Activated CD8-positive, alpha-beta T cell treated with anti-CD3 and anti-CD28 coated beads for 36 hours (primary cell): ENCODE measurements at regions of chr12 and their contacts with region 1.

Region 1: DNA sequence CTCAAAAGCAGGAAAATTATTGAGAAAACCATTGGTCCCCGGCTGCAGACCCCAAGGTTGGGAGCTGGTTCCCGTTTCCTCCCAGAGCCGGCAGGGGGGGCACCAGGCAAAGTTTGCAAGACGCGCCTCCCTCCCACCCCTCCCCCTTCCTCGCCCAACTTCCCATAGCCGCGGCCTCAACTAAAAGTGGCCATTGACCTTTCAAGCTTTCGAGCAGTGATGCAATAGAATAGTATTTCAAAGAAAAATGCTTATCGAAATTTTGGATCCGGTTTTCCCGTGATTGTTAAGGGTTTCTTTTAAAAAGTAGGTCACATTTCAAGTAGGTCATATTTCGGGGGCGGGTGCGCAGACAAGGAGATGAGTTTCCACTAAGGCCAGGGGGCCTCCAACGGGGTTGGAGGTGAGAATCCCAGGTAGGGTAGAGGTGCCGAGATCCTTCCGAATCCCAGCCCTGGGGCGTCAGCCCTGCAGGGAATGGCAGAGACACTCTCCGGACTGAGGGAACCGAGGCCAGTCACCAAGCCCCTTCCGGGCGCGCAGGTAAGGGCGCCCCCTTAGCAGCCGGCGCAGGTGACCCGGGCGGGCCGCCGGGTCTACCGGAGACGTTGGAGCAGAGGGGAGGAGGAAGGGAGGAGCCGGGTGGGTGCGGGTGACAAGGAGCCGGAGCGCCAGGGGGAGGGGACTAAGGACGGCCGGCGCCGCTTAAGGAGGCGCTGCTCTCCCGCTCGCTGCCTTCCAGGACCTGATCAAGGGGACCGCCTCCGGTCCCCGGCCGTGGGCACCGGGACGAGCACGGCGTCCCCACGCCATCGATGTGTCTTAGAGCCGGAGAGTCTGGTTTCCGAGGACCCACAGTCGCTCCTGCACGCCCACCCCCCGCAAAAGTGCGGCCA is 2.6 kb upstream of the SOCS2 start:
- DNase-seq: peak; percentile 86
- ATAC-seq: peak; percentile 56
- H3K4me3 Mint-ChIP-seq: peak overlapping the region; percentile 81
- H3K27ac Mint-ChIP-seq: peak overlapping the region; percentile 88
- H3K4me1 Mint-ChIP-seq: peaks cover 26% of the 10 kb centered on the region
- H3K27me3 Mint-ChIP-seq: peaks cover 11% of the 10 kb centered on the region
- CTCF ChIP-seq: peak; percentile 79

Region 2: DNA sequence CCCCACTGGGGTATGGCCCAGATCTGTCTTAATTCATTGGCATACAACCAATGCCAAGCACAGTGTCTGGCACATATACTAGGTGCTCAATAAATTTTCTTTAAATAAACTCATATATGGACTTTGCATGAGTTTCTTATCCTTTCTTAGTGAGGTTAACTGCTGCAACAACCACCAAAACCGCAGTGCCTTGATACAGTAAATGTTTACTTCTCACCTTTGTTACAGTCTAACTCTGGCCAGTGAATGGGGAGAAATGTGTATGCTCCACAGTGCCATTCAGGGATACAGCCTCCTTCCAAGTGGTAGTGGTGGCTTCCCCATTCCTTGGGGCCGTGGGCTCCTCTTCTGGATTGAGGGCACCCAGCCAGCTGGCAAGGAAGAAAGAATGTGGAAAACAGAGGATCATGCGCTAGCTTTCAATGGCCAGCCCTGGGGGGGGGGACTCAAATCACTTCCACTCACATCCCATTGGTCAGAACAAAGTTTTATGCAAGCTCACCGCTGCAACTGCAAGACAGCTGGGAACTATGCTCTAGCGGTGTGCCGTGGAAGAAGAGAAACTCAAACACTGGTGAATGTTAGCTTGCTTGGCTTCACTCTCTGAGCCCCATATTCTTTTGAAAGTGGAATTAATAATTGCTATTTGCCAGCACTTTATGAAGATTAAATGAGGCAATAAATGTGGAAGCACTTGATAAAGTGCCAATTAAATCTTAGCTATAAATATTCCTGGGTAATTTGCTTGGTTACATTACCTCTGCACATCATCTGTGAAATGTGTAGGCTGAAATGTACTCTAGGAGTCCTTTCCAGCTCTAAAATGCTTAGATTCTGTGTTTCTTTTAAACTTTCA is 48.5 kb before region 1 on chr12:
- CTCF ChIA-PET with region 1: no interaction called
- POLR2A ChIA-PET with region 1: no interaction called
- intact Hi-C with region 1: no loop called
- DNase-seq: no peak
- ATAC-seq: no peak
- H3K4me3 Mint-ChIP-seq: no peak overlapping the region
- H3K27ac Mint-ChIP-seq: no peak overlapping the region
- H3K4me1 Mint-ChIP-seq: no peaks in the 10 kb centered on the region
- H3K27me3 Mint-ChIP-seq: peaks cover 5% of the 10 kb centered on the region
- CTCF ChIP-seq: no peak

Region 3: DNA sequence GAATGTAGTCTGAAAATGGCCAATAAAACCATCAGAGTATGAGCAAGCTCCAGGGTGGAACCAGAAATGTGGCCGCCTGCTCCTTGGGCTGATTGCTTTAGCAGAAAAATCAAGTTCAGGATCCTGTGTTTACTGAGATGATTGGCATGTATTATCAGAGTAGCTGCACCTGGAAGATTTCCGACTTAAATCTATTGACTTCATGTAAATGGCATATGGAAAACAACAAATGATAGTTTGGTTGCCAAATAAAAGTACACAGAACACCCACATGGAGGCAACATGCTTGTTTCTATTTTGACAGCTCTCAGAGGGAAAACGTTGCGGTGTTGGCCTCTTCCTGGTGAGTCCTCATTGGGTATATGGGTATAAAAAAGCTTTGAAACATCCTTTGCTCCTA is 33.9 kb after region 1 on chr12:
- CTCF ChIA-PET with region 1: no interaction called
- POLR2A ChIA-PET with region 1: no interaction called
- intact Hi-C with region 1: no loop called
- DNase-seq: no peak
- ATAC-seq: no peak
- H3K4me3 Mint-ChIP-seq: no peak overlapping the region
- H3K27ac Mint-ChIP-seq: no peak overlapping the region
- H3K4me1 Mint-ChIP-seq: peaks cover 2% of the 10 kb centered on the region
- H3K27me3 Mint-ChIP-seq: peaks cover 8% of the 10 kb centered on the region
- CTCF ChIP-seq: no peak

Region 4: GRCh38 chr12:93677195-93678064 is 107.5 kb after region 1 on chr12 and contains the start of gene CRADD:
- CTCF ChIA-PET with region 1: interaction called, 3 read pairs
- POLR2A ChIA-PET with region 1: interaction called, 5 read pairs
- intact Hi-C with region 1: loop called (anchors 2 kb)
- DNase-seq: peak; percentile 92
- ATAC-seq: peak; percentile 96
- H3K4me3 Mint-ChIP-seq: peak within 1 kb of the TSS; percentile 98
- H3K27ac Mint-ChIP-seq: peak within 1 kb of the TSS; percentile 100
- H3K4me1 Mint-ChIP-seq: peaks cover 31% of the 10 kb centered on the region
- H3K27me3 Mint-ChIP-seq: peaks cover 10% of the 10 kb centered on the region
- CTCF ChIP-seq: no peak
- total RNA-seq, gene CRADD: 7.0 to 11.3 TPM

Region 5: DNA sequence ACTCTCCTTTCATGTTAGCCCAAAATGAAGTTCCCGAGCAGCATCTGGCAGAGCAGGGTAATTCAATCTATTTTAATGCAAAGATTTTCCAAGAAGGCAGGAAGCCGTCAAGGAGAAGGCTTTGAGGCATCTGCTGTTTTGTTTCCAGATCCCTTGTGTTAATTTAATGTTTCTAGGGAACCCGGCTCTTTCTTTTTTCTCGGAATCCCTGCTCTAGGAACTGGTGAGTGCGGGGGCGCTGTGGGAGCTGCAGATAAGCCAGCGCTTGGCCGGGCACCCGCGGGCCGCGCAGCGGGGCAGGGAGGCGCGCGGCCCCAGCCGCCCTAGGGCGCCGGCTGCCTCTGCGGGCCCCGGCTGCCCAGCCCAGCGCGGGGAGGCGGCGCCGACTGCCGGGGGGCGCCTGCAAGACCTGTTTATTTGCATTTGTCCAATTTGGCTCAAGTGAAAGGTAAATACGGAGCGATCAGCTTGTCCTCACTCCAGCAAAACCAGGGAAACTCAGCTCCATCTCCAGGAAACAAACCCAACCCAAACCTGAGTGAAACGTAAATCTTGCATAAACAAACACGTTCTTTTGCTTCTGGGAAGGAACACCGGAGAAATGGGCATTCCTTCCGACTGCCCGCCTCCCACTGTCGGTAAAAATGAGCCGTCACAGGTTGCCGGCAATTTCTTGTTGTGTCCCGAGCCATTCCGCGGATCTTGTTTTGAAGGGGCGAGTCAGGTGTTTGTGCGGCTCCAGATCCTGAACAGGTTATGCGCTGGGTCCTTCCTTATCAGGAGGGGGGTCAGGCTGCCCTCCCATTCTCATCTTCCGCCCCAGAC is 172.4 kb after region 1 on chr12:
- CTCF ChIA-PET with region 1: interaction called, 5 read pairs
- POLR2A ChIA-PET with region 1: interaction called, 3 read pairs
- intact Hi-C with region 1: loop called (anchors 2 kb)
- DNase-seq: peak; percentile 87
- ATAC-seq: peak; percentile 94
- H3K4me3 Mint-ChIP-seq: peak overlapping the region; percentile 80
- H3K27ac Mint-ChIP-seq: peak overlapping the region; percentile 95
- H3K4me1 Mint-ChIP-seq: peaks cover 36% of the 10 kb centered on the region
- H3K27me3 Mint-ChIP-seq: no peaks in the 10 kb centered on the region
- CTCF ChIP-seq: no peak

Region 6: DNA sequence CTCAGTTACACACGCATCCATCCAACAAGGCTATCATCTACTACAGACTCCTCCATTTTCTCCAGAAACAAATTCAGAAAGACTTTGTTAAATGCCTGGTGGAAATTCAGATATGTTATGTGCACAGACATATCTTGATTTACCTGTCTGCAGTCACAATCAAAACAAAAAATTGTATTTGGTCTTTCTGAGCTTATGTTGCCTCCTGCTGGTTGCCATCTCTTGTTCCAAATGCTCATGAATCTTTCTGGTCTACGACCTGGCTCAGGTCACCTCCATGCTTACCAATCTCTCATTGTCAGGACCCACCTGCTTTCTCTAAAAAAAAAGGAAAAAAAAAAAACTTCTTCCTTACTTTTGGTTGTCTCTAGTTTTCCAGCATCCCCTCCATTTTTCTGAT is 409.3 kb after region 1 on chr12:
- CTCF ChIA-PET with region 1: interaction called, 4 read pairs
- POLR2A ChIA-PET with region 1: no interaction called
- intact Hi-C with region 1: loop called (anchors 10 kb)
- DNase-seq: peak; percentile 44
- ATAC-seq: no peak
- H3K4me3 Mint-ChIP-seq: no peak overlapping the region
- H3K27ac Mint-ChIP-seq: no peak overlapping the region
- H3K4me1 Mint-ChIP-seq: peaks cover 20% of the 10 kb centered on the region
- H3K27me3 Mint-ChIP-seq: peaks cover 2% of the 10 kb centered on the region
- CTCF ChIP-seq: peak; percentile 35

Region 7: DNA sequence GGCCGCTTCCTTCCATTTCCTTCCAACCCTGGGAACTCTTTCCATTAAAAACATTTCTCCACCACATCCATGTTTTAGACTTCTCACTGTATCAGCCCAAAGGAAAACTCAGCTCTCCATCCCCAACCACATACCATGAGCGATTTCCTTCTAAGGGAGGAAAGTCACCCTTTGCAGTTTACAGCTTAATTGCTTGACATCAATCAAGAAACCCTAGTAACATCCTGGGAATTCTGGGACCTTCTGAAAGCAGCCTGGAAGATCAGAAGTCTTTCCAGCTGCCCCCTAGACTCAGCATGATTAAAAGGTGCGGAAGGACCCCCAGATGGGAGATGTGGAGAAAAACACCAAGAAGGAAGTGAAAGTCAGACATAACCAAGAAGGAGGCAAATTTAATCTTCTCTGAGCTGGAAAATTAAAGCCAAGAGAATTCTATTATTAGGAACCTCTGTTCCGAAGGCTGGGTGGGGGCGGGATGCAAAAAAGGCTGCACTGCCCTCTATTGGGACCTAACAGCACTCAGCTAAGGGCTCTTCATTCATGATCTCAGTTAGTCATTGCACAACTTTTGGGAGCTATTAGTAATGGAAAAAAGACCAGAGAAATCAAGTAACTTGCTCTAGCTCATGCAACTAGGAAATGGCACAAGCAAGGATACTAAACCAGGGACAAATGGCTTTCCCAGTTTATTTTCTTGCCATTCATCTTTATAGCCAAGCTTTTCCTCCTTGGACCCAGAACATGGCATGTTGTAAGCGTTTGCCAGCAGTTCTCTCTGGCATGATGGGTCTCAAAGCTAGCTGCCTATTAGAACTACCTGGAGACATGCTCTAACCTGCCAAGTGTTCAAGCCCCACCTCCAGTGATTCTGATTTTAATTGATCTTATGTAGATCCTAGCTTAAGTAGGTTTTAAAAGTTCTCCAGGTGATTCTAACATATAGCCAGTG is 505.4 kb after region 1 on chr12:
- CTCF ChIA-PET with region 1: interaction called, 10 read pairs
- POLR2A ChIA-PET with region 1: interaction called, 3 read pairs
- intact Hi-C with region 1: no loop called
- DNase-seq: peak; percentile 32
- ATAC-seq: peak; percentile 62
- H3K4me3 Mint-ChIP-seq: no peak overlapping the region
- H3K27ac Mint-ChIP-seq: no peak overlapping the region
- H3K4me1 Mint-ChIP-seq: peaks cover 12% of the 10 kb centered on the region
- H3K27me3 Mint-ChIP-seq: peaks cover 5% of the 10 kb centered on the region
- CTCF ChIP-seq: peak; percentile 14